MCF 10A (cell line): ENCODE measurements at regions of chr1 and their contacts with region 1.

Region 1: GRCh38 chr1:201709564-201710295 is 119.2 kb upstream of the IPO9 start:
- DNase-seq: peak; percentile 87
- H3K4me3 Mint-ChIP-seq: no peak overlapping the region
- H3K27ac Mint-ChIP-seq: no peak overlapping the region
- H3K4me1 Mint-ChIP-seq: peaks cover 52% of the 10 kb centered on the region
- H3K27me3 Mint-ChIP-seq: no peaks in the 10 kb centered on the region
- CTCF ChIP-seq: peak; percentile 100

Region 2: GRCh38 chr1:201254625-201255506 is 454.9 kb before region 1 on chr1:
- CTCF ChIA-PET with region 1: no interaction called
- POLR2A ChIA-PET with region 1: no interaction called
- intact Hi-C with region 1: no loop called
- DNase-seq: peak; percentile 80
- H3K4me3 Mint-ChIP-seq: no peak overlapping the region
- H3K27ac Mint-ChIP-seq: no peak overlapping the region
- H3K4me1 Mint-ChIP-seq: no peaks in the 10 kb centered on the region
- H3K27me3 Mint-ChIP-seq: no peaks in the 10 kb centered on the region
- CTCF ChIP-seq: peak; percentile 100

Region 3: DNA sequence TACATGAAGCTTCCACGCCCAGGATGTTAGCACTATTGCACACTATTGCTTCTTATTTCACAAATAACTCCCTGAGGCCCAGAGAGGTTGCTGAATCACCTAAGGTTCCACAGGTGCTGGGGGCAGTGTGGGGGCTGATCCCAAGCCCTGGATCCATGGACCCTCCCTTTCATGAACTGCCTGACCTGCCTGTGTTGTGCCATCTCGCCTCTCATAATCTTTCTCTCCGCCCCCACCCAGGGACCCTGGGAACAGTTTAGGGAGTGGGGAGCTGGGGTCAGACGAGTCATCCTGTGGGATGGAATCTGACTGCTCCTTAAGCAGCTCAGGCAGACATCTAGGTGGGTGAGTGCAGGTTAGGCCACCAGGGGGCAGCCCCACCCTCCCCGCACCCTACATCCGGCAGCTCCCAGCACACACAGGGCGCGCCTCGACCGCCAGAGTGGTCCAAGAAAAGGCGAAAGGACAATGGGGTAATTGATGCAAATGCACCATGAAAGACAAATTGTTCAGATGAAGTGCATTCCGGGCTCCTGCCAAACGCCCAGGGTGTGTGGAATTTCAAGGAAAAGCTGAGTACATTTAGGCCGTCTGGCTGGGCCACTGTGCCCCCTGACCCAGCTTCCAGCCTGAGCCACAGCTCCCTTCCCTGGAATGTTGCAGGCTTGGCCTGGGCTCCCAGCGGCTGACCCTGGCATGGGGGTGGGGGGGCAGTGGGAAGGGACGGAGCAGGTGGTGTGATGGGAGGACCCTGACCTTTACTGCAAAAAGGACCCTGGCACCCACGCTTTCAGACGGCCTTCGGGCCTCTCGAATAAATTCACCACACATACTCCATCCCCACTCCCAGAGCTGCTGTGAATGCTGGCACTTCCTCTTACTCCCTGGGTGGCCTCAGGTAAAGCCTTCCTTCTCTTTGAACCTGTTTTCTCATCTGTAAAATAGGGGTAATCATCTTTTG is 261.5 kb before region 1 on chr1:
- CTCF ChIA-PET with region 1: no interaction called
- POLR2A ChIA-PET with region 1: no interaction called
- intact Hi-C with region 1: loop called (anchors 10 kb)
- DNase-seq: peak; percentile 89
- H3K4me3 Mint-ChIP-seq: no peak overlapping the region
- H3K27ac Mint-ChIP-seq: peak overlapping the region; percentile 36
- H3K4me1 Mint-ChIP-seq: peaks cover 8% of the 10 kb centered on the region
- H3K27me3 Mint-ChIP-seq: no peaks in the 10 kb centered on the region
- CTCF ChIP-seq: peak; percentile 98

Region 4: GRCh38 chr1:201559679-201560162 is 150.0 kb before region 1 on chr1:
- CTCF ChIA-PET with region 1: interaction called, 779 read pairs
- POLR2A ChIA-PET with region 1: interaction called, 21 read pairs
- intact Hi-C with region 1: loop called (anchors 1 kb)
- DNase-seq: peak; percentile 89
- H3K4me3 Mint-ChIP-seq: no peak overlapping the region
- H3K27ac Mint-ChIP-seq: peak overlapping the region; percentile 35
- H3K4me1 Mint-ChIP-seq: peaks cover 48% of the 10 kb centered on the region
- H3K27me3 Mint-ChIP-seq: no peaks in the 10 kb centered on the region
- CTCF ChIP-seq: peak; percentile 100

Region 5: DNA sequence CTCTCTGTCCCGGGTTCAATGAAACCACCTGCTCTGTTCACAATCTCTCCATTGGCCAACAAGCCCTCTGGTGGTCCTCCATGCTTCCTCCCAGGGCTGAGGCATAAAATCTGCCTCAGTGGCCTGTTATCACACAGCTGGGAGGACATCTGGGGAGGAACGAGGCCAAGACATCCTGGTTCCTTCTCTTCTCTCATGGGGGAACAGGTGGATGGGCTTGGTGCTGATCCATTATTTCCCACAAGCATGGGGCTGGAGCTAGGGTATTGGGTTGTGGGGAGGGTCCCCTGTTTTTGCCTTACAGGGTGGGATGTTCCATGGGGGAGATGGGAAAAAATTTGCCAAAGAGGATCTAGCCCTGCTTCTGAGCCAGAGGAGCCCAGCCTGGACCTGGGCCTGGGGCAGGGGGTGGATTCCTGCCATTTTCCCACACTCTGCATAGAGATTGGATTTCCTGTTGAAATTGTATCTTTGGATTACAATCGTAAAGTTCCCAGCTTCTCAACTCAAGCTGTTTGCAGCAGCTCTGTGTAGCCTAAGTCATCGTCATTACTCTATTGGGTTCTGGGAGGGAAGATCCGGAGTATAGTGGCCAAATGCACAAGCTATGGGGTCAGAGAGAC is 46.1 kb before region 1 on chr1:
- CTCF ChIA-PET with region 1: interaction called, 11 read pairs
- POLR2A ChIA-PET with region 1: no interaction called
- intact Hi-C with region 1: no loop called
- DNase-seq: no peak
- H3K4me3 Mint-ChIP-seq: no peak overlapping the region
- H3K27ac Mint-ChIP-seq: no peak overlapping the region
- H3K4me1 Mint-ChIP-seq: no peaks in the 10 kb centered on the region
- H3K27me3 Mint-ChIP-seq: no peaks in the 10 kb centered on the region
- CTCF ChIP-seq: no peak

Region 6: GRCh38 chr1:201739492-201740085 is 29.9 kb after region 1 on chr1:
- CTCF ChIA-PET with region 1: interaction called, 332 read pairs
- POLR2A ChIA-PET with region 1: interaction called, 163 read pairs
- intact Hi-C with region 1: loop called (anchors 1 kb)
- DNase-seq: peak; percentile 87
- H3K4me3 Mint-ChIP-seq: peak overlapping the region; percentile 91
- H3K27ac Mint-ChIP-seq: peak overlapping the region; percentile 87
- H3K4me1 Mint-ChIP-seq: peaks cover 46% of the 10 kb centered on the region
- H3K27me3 Mint-ChIP-seq: no peaks in the 10 kb centered on the region
- CTCF ChIP-seq: no peak

Region 7: GRCh38 chr1:201792534-201793305 is 83.0 kb after region 1 on chr1:
- CTCF ChIA-PET with region 1: interaction called, 1,744 read pairs
- POLR2A ChIA-PET with region 1: interaction called, 168 read pairs
- intact Hi-C with region 1: loop called (anchors 1 kb)
- DNase-seq: peak; percentile 96
- H3K4me3 Mint-ChIP-seq: no peak overlapping the region
- H3K27ac Mint-ChIP-seq: no peak overlapping the region
- H3K4me1 Mint-ChIP-seq: peaks cover 32% of the 10 kb centered on the region
- H3K27me3 Mint-ChIP-seq: no peaks in the 10 kb centered on the region
- CTCF ChIP-seq: peak; percentile 100

Region 8: DNA sequence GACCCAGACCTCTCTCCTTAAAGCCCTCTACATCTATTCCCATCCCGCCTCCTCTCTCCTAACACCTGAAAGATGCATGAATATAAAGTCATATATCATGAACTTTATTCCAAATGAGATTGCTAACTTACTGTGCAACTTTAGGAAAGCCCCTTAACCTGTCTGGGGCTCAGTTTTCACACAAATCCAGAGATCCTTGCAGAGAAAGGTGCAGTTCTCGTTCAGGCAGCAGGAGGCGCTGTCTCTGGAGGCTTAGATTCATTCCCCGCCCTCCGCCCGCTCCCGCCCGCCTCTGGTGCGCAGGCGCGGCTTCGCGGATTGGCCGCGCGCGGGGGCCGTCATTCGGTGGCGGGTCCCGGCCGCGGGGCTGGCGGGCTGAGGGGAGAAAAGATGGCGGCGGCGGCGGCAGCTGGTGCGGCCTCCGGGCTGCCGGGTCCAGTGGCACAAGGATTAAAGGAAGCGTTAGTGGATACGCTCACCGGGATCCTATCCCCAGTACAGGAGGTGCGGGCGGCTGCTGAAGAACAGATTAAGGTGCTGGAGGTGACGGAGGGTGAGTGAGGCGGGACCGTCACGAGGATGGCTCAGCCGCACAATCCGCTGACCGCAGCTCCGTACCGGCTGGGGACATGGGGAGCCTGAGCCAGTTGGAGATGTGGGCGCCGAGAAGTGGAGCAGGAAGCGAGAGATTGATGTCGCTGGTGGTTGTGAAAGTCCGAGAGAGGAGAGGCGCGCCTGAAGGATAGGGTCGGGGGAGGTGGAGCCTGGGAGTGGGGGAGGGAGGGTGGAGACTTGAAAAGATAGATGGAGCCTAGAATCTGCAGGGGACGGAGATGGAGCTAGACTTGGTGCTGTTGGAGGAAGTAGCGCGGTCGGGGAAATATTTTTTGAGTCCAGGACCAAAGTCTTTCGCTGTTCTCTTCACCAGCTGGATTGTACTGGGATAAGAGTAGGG is 119.4 kb after region 1 on chr1 and contains the start of gene IPO9:
- CTCF ChIA-PET with region 1: interaction called, 12 read pairs
- POLR2A ChIA-PET with region 1: interaction called, 19 read pairs
- intact Hi-C with region 1: no loop called
- DNase-seq: peak; percentile 98
- H3K4me3 Mint-ChIP-seq: peak within 1 kb of the TSS; percentile 100
- H3K27ac Mint-ChIP-seq: peak within 1 kb of the TSS; percentile 94
- H3K4me1 Mint-ChIP-seq: peaks cover 46% of the 10 kb centered on the region
- H3K27me3 Mint-ChIP-seq: no peaks in the 10 kb centered on the region
- CTCF ChIP-seq: peak; percentile 100
- total RNA-seq, gene IPO9: 112 and 117 TPM in 2 replicates

Region 9: DNA sequence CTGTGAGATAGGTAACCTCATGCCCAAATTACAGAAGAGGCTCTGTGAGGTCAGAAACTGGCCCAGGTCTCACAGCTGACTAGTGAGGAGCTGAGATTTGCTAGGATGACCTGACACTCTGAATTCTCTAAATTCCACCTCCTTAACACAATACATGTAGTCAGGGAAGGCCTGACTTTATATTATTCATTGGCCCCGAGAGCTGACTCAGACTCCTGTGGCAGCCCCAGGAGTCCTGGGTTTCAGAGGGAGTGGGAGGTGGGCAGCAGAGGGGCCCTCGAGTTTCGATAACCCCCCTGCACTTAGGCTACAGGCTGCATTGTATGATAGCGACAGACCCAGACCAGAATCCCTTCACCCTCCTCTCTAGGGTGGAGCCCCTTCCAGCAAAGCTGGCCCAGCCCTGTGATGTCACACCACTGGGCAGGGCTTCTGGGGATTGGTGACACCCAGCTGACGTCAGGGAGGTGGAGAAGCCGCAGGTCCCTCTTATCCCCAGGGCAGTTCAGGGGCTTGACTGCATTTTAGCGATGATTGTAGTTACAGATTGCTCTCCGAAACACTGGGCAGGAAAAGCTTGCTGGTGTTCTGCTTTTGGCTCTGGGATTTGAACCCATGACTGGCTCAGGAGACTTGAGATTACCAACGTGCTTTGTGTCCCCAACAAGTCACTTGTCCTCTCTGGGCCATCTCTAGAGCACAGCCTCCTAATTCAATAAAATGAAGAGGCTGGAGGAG is 396.0 kb after region 1 on chr1:
- CTCF ChIA-PET with region 1: no interaction called
- POLR2A ChIA-PET with region 1: no interaction called
- intact Hi-C with region 1: no loop called
- DNase-seq: peak; percentile 76
- H3K4me3 Mint-ChIP-seq: no peak overlapping the region
- H3K27ac Mint-ChIP-seq: peak overlapping the region; percentile 2
- H3K4me1 Mint-ChIP-seq: peaks cover 40% of the 10 kb centered on the region
- H3K27me3 Mint-ChIP-seq: no peaks in the 10 kb centered on the region
- CTCF ChIP-seq: no peak